ENCODE measurements at regions of chr2 and their contacts with region 1.

Region 1: GRCh38 chr2:75787532-75788132 is 76.9 kb upstream of the GCFC2 start:
- DNase-seq: peak; percentile 58
- H3K4me3 Mint-ChIP-seq: no peak overlapping the region
- H3K27ac Mint-ChIP-seq: peak overlapping the region; percentile 71
- H3K4me1 Mint-ChIP-seq: peaks cover 28% of the 10 kb centered on the region
- H3K27me3 Mint-ChIP-seq: no peaks in the 10 kb centered on the region
- CTCF ChIP-seq: peak; percentile 61

Region 2: GRCh38 chr2:75798569-75798968 is 10.9 kb after region 1 on chr2:
- CTCF ChIA-PET with region 1: interaction called, 12 read pairs
- POLR2A ChIA-PET with region 1: no interaction called
- intact Hi-C with region 1: no loop called
- DNase-seq: no peak
- H3K4me3 Mint-ChIP-seq: no peak overlapping the region
- H3K27ac Mint-ChIP-seq: no peak overlapping the region
- H3K4me1 Mint-ChIP-seq: no peaks in the 10 kb centered on the region
- H3K27me3 Mint-ChIP-seq: no peaks in the 10 kb centered on the region
- CTCF ChIP-seq: no peak

Region 3: DNA sequence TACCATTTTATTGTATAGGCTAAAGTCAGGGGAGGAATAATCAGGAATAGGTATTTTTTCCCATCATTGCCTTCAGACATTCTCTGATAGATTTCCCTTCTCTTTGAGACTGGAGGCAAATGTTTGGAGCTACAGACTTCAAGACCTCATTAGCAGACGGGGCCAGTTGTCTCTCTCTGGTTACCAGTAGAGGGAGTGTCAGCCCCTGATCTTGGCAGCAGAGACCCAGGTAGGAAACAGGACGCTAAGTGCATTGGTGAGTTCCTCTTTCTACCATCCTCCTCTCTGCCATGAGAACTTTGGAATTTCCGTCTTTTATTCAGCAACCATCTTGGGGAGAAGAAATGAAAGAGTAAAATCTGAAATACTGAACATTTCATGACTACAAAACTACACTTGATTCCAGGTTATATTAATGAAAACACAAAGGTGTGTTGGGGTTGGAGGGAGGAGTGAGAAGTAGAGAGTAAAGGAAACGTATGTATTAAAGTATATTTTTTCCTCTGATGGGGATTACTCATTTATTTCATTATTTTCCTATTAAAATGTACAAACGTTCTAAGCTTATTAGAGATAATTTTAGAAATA is 109.2 kb after region 1 on chr2:
- CTCF ChIA-PET with region 1: interaction called, 5 read pairs
- POLR2A ChIA-PET with region 1: no interaction called
- intact Hi-C with region 1: loop called (anchors 5 kb)
- DNase-seq: peak; percentile 72
- H3K4me3 Mint-ChIP-seq: no peak overlapping the region
- H3K27ac Mint-ChIP-seq: no peak overlapping the region
- H3K4me1 Mint-ChIP-seq: no peaks in the 10 kb centered on the region
- H3K27me3 Mint-ChIP-seq: no peaks in the 10 kb centered on the region
- CTCF ChIP-seq: peak; percentile 56

Region 4: DNA sequence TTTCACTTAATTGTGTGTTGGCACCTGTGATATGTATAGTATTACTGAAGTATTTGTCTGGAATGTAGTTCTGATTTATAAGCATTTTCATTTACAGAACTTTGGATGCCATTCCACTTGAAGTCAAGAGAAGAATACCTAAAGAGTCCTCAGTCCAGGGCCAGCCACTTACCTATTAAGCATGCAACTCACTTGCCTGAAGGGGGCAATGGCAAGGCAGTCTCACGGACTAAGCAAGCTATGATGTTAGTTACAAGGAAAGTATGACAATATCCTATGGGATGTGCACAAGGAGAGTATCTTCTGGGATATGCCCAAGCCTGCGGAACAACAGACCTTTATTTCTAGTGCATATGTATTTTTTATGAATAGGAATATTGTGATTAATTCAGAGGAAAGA is 292.5 kb after region 1 on chr2:
- CTCF ChIA-PET with region 1: no interaction called
- POLR2A ChIA-PET with region 1: no interaction called
- intact Hi-C with region 1: loop called (anchors 10 kb)
- DNase-seq: peak; percentile 1
- H3K4me3 Mint-ChIP-seq: no peak overlapping the region
- H3K27ac Mint-ChIP-seq: no peak overlapping the region
- H3K4me1 Mint-ChIP-seq: peaks cover 5% of the 10 kb centered on the region
- H3K27me3 Mint-ChIP-seq: no peaks in the 10 kb centered on the region
- CTCF ChIP-seq: no peak

Region 5: DNA sequence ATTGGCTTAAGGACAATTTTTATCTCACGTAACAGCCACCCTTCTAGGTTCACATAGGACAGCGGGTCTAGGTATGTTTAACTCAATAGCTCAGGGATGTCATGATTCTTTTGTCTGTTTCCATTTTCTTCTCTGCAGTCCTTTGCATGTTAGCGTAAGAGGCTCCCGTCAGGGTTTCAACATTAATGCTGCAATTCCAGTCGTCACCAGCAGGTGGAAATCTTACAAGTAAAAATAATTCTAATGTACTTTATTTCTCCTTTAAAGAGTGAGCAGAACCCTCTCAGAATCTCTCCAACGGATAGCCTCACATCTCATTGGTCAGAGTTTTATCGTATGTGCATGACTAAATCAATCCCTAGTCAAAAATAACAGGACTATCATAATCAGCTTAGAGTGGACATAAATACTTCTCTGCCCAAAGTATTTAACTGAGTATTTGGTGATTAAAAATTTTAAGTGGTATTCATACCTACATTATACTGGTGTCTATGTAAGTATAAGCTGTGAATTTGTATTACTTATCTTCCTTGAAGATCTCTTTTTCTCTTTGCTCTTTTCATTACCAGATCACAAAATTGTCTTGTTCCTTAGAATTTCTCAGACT is 410.3 kb after region 1 on chr2:
- CTCF ChIA-PET with region 1: interaction called, 5 read pairs
- POLR2A ChIA-PET with region 1: no interaction called
- intact Hi-C with region 1: loop called (anchors 1 kb)
- DNase-seq: peak; percentile 78
- H3K4me3 Mint-ChIP-seq: no peak overlapping the region
- H3K27ac Mint-ChIP-seq: no peak overlapping the region
- H3K4me1 Mint-ChIP-seq: no peaks in the 10 kb centered on the region
- H3K27me3 Mint-ChIP-seq: no peaks in the 10 kb centered on the region
- CTCF ChIP-seq: peak; percentile 56

Region 6: DNA sequence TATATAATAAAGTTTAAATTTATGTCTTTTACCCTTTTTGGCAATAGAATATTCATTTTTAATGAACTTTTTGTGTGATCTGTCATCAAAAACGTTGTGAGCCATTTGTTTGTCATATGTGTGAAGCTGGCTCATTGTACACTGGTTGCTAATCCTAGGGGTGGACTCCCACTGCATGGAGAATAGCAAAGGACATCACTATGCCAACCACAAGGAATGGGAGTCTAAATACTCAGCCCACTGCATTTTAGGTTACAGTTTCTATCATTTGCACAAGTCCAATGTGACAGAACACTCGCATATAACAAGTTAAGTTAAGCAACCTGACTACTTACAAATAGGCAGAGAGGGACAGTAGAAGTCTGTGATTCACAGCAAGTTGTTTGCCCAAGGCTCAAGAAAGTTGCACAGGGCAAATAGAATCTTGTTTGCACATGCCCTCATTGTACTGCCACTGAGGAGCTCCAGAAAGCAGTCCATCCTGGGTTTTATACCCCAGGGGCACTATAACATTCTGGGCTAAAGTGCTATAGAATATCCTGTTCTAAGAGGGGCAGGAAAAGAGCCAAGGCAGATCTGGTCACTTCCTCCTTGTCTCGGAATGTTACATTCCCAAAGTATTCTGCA is 468.9 kb after region 1 on chr2:
- CTCF ChIA-PET with region 1: no interaction called
- POLR2A ChIA-PET with region 1: no interaction called
- intact Hi-C with region 1: loop called (anchors 10 kb)
- DNase-seq: peak; percentile 57
- H3K4me3 Mint-ChIP-seq: no peak overlapping the region
- H3K27ac Mint-ChIP-seq: no peak overlapping the region
- H3K4me1 Mint-ChIP-seq: no peaks in the 10 kb centered on the region
- H3K27me3 Mint-ChIP-seq: peaks cover 33% of the 10 kb centered on the region
- CTCF ChIP-seq: no peak

Region 7: DNA sequence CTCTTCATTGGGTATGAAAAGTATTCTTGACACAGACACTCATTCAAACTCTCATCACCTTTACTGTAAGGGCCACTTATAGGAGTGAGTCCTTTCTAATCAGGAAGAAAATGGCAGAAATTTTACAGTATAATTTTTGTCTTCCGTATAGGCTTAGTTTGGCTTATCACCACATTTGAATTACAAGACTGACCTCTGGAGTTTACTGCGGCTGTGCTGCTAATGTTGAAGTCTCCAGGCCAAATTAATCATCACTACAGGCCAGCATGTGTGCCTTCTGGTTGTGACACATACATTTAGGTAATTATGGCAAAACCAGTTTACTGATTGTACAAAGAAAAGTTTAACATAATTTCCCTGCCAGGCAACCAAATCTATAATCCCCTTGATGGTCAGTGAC is 676.7 kb after region 1 on chr2:
- CTCF ChIA-PET with region 1: no interaction called
- POLR2A ChIA-PET with region 1: no interaction called
- intact Hi-C with region 1: loop called (anchors 5 kb)
- DNase-seq: peak; percentile 17
- H3K4me3 Mint-ChIP-seq: no peak overlapping the region
- H3K27ac Mint-ChIP-seq: no peak overlapping the region
- H3K4me1 Mint-ChIP-seq: no peaks in the 10 kb centered on the region
- H3K27me3 Mint-ChIP-seq: peaks cover 42% of the 10 kb centered on the region
- CTCF ChIP-seq: no peak

Measured in MCF 10A (cell line).